Naive thymus-derived CD4-positive, alpha-beta T cell (primary cell): ENCODE measurements at regions of chr7 and their contacts with region 1.

Region 1: DNA sequence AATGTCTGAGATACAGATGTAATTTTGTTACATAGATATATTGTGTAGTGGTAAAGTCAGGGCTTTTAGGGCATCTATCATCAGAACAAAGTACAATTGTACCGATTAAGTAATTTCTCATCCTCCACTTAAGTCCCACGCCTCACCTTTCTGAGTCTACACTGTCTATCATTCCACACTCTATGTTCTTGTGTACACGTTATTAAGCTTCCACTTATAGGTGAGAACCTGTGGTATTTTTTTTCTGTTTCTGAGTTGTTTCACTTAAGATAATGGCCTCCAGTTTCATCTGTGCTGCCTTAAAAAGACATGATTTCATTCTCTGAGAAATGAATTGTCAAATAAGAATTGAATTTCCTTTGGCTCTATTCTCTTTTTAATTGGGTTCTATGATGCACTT is 15.5 kb upstream of the OSBPL3 start:
- DNase-seq: no peak
- ATAC-seq: no peak
- H3K4me3 ChIP-seq: no peak overlapping the region
- H3K4me3 Mint-ChIP-seq: no peak overlapping the region
- H3K27ac ChIP-seq: no peak overlapping the region
- H3K27ac Mint-ChIP-seq: no peak overlapping the region
- H3K4me1 ChIP-seq: no peaks in the 10 kb centered on the region
- H3K4me1 Mint-ChIP-seq: no peaks in the 10 kb centered on the region
- H3K27me3 ChIP-seq: no peaks in the 10 kb centered on the region
- H3K27me3 Mint-ChIP-seq: peaks cover 0 to 46% (median 1%) of the 10 kb centered on the region in 5 donors

Region 2: GRCh38 chr7:25009257-25009656 is 13.8 kb after region 1 on chr7:
- CTCF ChIA-PET with region 1: no interaction called
- POLR2A ChIA-PET with region 1: no interaction called
- intact Hi-C with region 1: loop called in 1 of 2 experiments (anchors 2 kb)
- DNase-seq: no peak
- ATAC-seq: no peak
- H3K4me3 ChIP-seq: no peak overlapping the region
- H3K4me3 Mint-ChIP-seq: no peak overlapping the region
- H3K27ac ChIP-seq: no peak overlapping the region
- H3K27ac Mint-ChIP-seq: no peak overlapping the region
- H3K4me1 ChIP-seq: no peaks in the 10 kb centered on the region
- H3K4me1 Mint-ChIP-seq: no peaks in the 10 kb centered on the region
- H3K27me3 ChIP-seq: no peaks in the 10 kb centered on the region
- H3K27me3 Mint-ChIP-seq: peaks cover 0 to 12% (median 0%) of the 10 kb centered on the region in 5 donors